ENCODE measurements at regions of chr18 and their contacts with region 1.

Region 1: DNA sequence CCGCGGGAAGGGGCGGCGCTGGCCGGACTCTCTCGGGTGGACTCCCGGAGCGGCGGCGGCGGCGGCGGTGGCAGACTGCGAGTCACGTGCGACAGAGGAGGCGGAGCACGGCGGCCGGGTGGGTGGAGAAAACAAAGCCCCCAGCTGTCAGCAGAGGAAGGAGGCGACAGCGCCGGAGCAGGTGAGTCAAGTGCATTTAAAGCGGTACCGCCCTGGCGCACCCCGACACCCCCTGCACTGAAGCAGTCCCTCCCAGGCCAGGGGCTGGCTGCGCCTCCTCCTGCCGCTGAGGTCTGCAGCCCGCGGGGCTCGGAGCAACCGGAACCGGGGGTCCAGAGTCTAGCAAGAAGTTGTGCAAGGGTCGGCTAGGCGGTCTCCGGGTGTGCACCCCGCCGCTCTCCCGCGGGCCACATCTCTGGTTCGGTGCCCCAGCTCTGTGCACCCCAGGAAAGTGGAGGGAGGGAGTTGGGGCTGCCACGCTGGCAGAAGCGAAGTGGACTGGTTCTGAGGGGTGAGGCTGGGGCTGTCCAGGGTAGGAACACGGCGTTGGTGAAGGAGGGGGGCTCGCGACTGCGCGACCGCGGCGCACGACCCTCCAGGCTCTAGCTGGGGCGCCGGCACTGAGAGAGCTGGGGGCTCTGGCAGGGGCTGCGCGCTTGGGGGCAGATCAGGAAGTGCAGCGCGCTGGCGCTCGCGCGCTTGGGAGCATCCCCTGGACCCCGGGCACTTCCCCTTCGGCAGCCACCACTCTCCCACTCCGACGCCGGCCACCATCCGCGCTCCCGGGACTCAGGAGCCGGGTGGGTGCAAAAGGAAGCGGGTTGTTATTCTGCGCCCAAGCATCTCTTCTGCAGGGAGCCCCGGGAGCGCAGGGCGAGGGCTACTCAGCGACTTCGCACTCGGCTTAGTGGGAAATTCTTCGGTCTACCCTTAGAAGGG is 64.0 kb upstream of the MAPRE2 start:
- DNase-seq: peak; percentile 78
- H3K4me3 Mint-ChIP-seq: peak overlapping the region; percentile 72
- H3K27ac Mint-ChIP-seq: no peak overlapping the region
- H3K4me1 Mint-ChIP-seq: peaks cover 23% of the 10 kb centered on the region
- H3K27me3 Mint-ChIP-seq: peaks cover 30% of the 10 kb centered on the region

Region 2: GRCh38 chr18:34857320-34857719 is 119.8 kb before region 1 on chr18:
- CTCF ChIA-PET with region 1: no interaction called
- POLR2A ChIA-PET with region 1: no interaction called
- intact Hi-C with region 1: loop called (anchors 1 kb)
- DNase-seq: no peak
- H3K4me3 Mint-ChIP-seq: no peak overlapping the region
- H3K27ac Mint-ChIP-seq: no peak overlapping the region
- H3K4me1 Mint-ChIP-seq: peaks cover 6% of the 10 kb centered on the region
- H3K27me3 Mint-ChIP-seq: peaks cover 31% of the 10 kb centered on the region

Region 3: GRCh38 chr18:34867520-34867919 is 109.6 kb before region 1 on chr18:
- CTCF ChIA-PET with region 1: no interaction called
- POLR2A ChIA-PET with region 1: no interaction called
- intact Hi-C with region 1: loop called (anchors 1 kb)
- DNase-seq: peak; percentile 24
- H3K4me3 Mint-ChIP-seq: no peak overlapping the region
- H3K27ac Mint-ChIP-seq: no peak overlapping the region
- H3K4me1 Mint-ChIP-seq: peaks cover 35% of the 10 kb centered on the region
- H3K27me3 Mint-ChIP-seq: peaks cover 12% of the 10 kb centered on the region

Region 4: DNA sequence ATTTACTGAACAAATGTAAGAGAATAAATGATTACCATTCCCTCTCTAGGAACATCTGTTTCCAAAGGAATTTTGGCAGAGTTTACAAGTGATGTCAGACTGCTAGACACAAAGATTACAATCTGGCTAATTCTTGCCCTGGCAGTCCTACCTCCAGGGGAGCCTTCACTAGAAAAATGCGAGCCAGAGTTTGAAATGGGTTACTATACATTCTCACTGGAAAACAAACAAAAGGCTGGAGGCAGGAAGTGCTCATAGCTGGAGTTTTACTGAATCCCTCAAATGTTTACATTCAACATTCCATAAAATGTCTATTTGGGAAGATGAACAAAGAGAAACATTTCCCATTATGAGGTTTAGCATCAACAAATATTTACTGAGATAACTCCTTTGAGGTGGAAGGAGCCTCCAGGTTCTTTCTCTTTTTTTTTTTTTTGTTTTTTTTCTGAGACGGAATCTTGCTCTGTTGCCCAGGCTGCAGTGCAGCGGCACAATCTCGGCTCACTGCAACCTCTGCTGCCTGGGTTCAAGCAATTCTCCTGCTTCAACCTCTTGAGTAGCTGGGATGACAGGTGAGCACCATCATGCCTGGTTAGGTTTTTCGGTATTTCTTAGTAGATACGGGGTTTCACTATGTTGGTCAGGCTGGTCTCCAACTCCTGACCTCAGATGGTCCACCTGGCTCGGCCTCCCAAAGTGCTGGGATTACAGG is 65.0 kb before region 1 on chr18:
- CTCF ChIA-PET with region 1: no interaction called
- POLR2A ChIA-PET with region 1: no interaction called
- intact Hi-C with region 1: loop called (anchors 5 kb)
- DNase-seq: no peak
- H3K4me3 Mint-ChIP-seq: no peak overlapping the region
- H3K27ac Mint-ChIP-seq: no peak overlapping the region
- H3K4me1 Mint-ChIP-seq: peaks cover 3% of the 10 kb centered on the region
- H3K27me3 Mint-ChIP-seq: peaks cover 10% of the 10 kb centered on the region

Region 5: DNA sequence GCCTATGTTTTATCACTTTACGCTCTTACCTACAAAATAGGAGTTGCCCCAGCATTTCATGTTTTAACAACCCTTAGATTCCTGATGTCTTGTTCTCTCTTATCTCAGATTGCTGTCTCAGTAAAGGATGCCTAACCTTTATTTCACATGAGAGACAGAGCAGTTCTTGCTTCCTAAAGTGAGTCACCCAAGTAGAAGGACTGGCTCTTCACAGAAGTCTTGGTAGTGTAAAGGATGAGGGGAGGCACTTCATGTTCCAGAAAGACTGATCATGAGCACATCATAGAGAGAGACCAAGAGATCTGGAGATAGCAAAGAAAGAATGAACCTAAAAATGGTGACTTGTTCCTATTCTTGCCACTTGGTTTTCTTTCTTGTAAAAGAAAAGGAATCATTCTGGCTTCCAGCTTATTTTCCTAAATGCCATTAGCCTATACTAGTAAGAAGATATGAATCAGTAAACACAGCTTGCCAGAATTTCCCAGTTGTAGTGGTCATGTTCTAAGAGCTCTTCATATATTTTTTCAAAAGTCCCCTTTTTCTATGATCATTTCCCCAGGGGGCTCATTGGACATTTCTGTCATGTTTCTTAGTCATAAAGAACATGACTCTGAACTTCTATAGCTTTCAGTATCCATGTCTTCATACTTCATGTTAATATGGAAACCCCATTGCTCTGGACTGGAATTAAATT is 119.0 kb after region 1 on chr18:
- CTCF ChIA-PET with region 1: no interaction called
- POLR2A ChIA-PET with region 1: no interaction called
- intact Hi-C with region 1: loop called (anchors 5 kb)
- DNase-seq: no peak
- H3K4me3 Mint-ChIP-seq: no peak overlapping the region
- H3K27ac Mint-ChIP-seq: peak overlapping the region; percentile 19
- H3K4me1 Mint-ChIP-seq: peaks cover 22% of the 10 kb centered on the region
- H3K27me3 Mint-ChIP-seq: no peaks in the 10 kb centered on the region